Posterior vena cava (tissue), 2 donors: ENCODE measurements at regions of chr1 and their contacts with region 1.

Region 1: DNA sequence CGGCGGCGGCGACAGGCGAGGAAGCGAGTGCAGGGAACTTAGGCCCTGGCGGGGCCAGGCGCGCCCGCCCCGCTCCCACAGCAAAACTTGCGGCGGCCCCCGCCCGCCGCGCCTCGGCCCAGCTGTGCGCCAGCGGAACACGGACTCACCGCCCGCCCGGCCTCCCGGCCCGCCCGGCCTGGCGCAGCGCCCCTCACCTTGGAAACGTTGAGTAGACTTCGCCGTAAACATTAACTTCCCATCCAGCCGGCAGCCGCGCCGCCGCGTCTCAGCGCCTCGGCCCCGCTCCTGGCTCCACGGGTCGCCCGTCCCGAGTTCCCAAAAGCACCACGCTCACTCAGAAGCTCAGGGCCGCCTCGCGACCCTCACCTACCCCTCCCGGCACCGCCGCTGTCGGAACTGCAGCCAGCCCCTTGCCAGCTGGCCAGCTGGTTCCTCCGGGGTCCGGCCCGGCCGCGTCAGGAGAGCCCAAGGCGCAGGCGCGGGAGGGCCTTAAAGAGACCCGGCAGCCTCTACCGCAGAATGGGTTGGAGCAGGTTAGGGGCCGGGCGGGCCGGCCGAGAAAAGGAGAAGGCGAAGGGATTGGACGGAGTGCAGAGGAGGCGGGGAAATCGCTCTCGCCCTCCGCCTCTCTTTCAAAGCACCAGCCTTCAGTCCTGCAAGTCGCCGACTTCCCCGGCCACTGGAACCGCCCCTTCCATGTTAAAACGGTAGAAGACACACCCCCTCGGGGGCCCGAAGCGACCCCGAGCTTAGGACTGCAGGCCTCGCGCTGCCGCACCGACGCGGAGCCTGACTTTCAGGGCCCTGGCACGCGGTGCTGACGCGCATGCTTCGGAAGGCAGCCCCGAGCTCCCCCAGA is at the start of gene EVI5:
- DNase-seq: peak; percentile 98
- total RNA-seq, gene EVI5: 47.4 to 54.3 TPM

Region 2: GRCh38 chr1:92804721-92805169 is 19.9 kb after region 1 on chr1:
- intact Hi-C with region 1: no loop called
- DNase-seq: peak; percentile 88

Region 3: GRCh38 chr1:93349231-93350135 is 564.6 kb after region 1 on chr1:
- intact Hi-C with region 1: loop called in 1 of 2 experiments (anchors 10 kb)
- DNase-seq: no peak